ENCODE measurements at regions of chr16 and their contacts with region 1.

Region 1: DNA sequence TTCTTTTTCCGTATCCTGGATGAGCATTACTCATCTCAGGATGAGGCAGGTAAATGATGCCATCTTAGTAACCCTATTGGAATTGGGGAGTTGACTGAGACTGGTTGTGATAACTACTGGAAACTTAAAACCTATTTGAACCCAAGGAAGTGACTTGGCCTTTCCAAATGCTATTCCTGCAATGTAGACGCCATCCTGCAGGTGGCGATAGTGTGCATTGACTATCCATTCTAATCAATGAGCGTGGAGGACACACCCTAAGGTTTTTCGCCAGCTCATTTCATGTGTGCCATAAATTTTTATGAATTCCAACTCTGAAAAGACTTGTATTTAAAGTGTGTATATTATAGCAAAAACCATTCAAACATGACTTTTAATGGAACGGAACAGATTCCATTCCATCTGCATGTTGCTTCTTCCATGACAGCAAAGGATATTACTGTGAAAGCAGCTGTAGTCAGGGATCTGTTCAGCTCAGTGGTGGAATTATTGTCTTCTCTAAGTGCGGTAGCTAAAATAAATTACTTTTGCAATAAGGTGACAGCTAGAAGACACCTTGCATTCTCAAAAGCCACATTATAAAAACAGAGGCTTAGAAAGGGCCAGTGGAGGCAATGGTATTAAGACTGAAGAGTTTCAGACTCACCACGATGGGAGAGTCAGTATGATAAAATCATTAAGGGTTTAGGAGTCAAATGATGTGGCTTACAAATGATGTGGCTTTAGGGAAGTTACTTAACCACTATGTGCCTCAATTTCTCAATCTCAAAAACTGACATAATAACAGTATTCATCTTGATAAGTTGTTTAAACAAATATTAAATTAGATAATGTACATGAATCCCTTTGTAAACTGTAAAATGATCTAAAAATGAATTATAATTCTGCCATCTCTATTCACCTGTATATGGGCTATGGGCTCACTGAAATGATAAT is 55.5 kb downstream of the SYT17 start:
- DNase-seq: no peak
- ATAC-seq: no peak
- H3K4me3 ChIP-seq: no peak overlapping the region
- H3K27ac ChIP-seq: no peak overlapping the region
- H3K4me1 ChIP-seq: no peaks in the 10 kb centered on the region
- H3K27me3 ChIP-seq: no peaks in the 10 kb centered on the region
- CTCF ChIP-seq: peak in 11 of 12 donors; percentile 13 to 43 (median 30)
- POLR2A ChIP-seq: no peak

Region 2: DNA sequence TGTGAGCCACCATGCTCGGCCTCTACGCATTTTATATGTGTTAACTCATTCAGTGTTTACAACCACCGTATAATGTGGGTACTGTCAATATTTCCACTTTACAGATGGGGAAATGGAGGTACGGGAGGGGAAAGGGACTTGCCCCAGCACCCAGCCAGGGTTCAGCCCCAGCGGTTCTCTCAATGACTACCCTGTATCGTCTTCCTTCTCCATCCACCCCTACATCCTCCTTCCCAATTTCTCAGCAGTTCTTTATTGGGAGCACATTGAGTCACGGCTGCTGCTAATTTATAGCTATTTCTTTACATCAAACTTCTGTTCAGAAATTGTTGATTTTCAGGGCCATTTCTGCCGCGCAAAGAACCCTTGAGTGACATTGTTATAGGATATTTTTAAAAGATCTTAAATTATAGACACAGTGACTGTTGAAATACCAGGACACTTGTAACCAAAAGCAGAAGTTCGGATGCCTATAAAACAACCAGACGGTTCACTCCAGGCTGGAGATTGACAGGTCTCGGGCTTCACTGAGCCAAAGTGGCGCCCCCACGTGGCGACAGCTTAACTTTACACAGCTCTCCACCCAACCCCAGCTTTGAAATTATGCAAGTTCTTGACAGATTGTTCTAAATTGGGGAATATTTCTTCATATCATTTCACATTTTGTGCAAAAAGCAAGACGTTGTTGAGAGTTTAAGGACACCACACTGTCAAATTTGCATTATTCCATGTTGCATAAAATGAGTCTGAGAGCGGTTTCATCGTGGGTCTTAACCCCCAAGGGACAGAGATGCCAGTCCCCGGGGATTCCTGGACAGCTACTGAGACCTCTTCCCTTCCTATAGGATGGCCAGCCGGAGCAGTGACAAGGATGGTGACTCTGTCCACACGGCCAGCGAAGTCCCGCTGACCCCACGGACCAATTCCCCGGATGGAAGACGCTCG is 43.7 kb before region 1 on chr16:
- intact Hi-C with region 1: no loop called
- DNase-seq: peak; percentile 50 to 81 (median 54)
- ATAC-seq: peak; percentile 64 to 76 (median 72)
- H3K4me3 ChIP-seq: no peak overlapping the region
- H3K27ac ChIP-seq: no peak overlapping the region
- H3K4me1 ChIP-seq: peaks cover 0 to 5% (median 0%) of the 10 kb centered on the region in 12 donors
- H3K27me3 ChIP-seq: peaks cover 0 to 8% (median 0%) of the 10 kb centered on the region in 9 donors
- CTCF ChIP-seq: peak; percentile 41 to 82 (median 62)
- POLR2A ChIP-seq: no peak

Region 3: GRCh38 chr16:19284207-19284606 is 60.7 kb after region 1 on chr16:
- intact Hi-C with region 1: loop called in 1 of 10 experiments (anchors 10 kb)
- DNase-seq: peak in 1 of 5 donors; percentile 32
- ATAC-seq: peak in 2 of 4 donors; percentile 52 to 69
- H3K4me3 ChIP-seq: no peak overlapping the region
- H3K27ac ChIP-seq: no peak overlapping the region
- H3K4me1 ChIP-seq: no peaks in the 10 kb centered on the region
- H3K27me3 ChIP-seq: peaks cover 0 to 8% (median 0%) of the 10 kb centered on the region in 9 donors
- CTCF ChIP-seq: no peak
- POLR2A ChIP-seq: no peak